ENCODE measurements at regions of chr1 and their contacts with region 1.

Region 1: DNA sequence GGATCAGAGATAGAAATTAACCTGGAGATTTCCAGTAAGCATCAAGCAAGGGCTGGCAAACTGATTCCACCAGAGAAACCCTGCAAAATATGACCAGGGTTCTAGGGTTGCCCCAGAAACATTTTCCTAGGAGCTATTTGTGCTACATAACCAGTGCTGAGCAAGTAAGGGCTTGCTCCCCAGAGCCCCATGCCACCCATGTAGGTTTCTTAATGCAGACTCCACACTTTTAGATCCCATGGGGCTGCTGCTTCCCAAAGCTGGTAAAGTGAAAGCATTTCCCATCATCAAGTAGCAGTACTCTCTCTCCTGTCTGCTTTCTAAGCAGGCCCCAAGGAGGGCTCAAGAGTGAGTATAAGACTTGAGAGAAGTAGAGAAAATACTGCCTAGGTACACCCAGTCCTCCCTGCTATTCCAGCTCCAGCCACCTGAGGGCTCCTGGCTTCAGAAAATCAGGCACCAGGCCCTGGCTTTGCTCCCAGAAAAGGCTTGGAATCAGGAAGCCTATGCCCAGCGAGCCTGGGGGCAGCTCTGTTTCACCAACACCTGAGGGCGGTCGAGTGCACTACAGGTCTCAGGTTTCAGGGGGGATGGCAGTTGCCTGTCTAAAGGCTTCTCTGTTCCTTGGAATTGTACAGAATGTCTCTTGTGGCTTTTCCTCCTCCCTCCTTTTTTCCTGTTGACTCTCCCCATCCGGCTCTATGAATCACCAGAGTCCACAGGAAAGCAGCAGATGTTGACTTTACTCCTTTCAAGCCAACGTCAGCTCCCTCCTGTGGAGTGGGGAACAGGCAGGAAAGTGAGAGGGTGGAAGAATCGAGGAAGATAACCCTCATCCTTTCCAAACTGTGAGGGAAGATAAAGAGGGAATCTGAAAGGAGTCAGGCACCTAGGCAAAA is 6.2 kb upstream of the ANKRD35 start:
- DNase-seq: peak; percentile 86 to 97 (median 92)
- H3K4me3 ChIP-seq: peak overlapping the region in 32 of 59 donors; percentile 0 to 45 (median 20)
- H3K27ac ChIP-seq: peak overlapping the region in 57 of 59 donors; percentile 49 to 97 (median 88)
- H3K27me3 ChIP-seq: no peaks in the 10 kb centered on the region
- CTCF ChIP-seq: peak in 55 of 56 donors; percentile 85 to 100 (median 96)

Region 2: GRCh38 chr1:145845514-145846161 is 46.2 kb before region 1 on chr1 and contains the start of gene NUDT17:
- intact Hi-C with region 1: loop called in 1 of 2 experiments (anchors 2 kb)
- DNase-seq: peak; percentile 57 to 79 (median 72)
- H3K4me3 ChIP-seq: peak within 1 kb of the TSS; percentile 45 to 82 (median 66)
- H3K27ac ChIP-seq: peak within 1 kb of the TSS in 57 of 59 donors; percentile 17 to 89 (median 76)
- H3K27me3 ChIP-seq: no peaks in the 10 kb centered on the region
- CTCF ChIP-seq: peak; percentile 52 to 95 (median 89)
- total RNA-seq, gene NUDT17: 2.6 to 10.1 (median 5.5) TPM

Region 3: GRCh38 chr1:145906954-145907753 is 15.3 kb after region 1 on chr1:
- intact Hi-C with region 1: loop called in 1 of 2 experiments (anchors 2 kb)
- DNase-seq: no peak
- H3K4me3 ChIP-seq: no peak overlapping the region
- H3K27ac ChIP-seq: peak overlapping the region in 1 of 59 donors; percentile 31
- H3K27me3 ChIP-seq: no peaks in the 10 kb centered on the region
- CTCF ChIP-seq: no peak

Region 4: DNA sequence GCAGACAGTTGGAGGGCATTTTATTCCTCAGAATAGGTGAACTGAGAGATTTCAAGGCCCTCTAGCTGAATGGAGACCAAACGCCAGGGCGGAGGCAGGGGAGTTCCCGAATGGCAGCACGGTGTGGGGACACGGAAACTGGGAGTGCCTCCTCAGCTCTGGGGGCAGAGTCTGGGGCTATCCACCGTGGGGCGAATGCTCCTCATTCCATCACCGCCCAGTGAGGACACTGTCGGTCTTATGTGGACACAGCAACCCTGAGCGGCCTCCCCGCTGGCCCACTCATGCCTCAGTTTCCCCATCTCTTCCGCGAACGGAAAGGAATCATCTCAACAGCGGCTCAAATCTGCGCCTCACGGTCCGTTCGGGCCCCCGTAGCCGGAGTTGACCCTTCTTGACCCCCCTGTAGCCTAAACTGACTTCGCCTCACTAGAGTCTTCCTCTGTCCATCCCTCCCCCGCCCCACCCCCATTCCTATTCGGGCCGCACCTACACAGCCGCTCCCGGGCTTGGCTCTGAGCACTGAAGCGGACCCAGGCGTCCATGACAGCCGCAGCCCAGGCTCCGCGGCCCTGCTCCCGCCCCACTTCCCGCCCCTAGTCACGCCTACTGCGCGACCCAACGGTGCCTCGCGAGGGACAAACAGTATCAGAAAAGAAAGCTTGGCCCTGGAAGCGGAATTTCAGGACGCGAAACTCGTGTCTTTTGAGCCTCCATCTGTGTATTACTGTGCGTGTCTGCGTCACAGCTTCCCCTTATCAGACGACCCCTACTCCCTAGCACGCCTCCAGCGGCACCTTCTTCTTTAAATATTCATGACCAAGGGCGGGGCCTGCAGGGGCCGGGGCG is 26.5 kb after region 1 on chr1 and contains the start of gene PEX11B:
- intact Hi-C with region 1: no loop called
- DNase-seq: peak; percentile 84 to 93 (median 89)
- H3K4me3 ChIP-seq: peak within 1 kb of the TSS; percentile 52 to 99 (median 91)
- H3K27ac ChIP-seq: peak within 1 kb of the TSS; percentile 46 to 98 (median 93)
- H3K27me3 ChIP-seq: no peaks in the 10 kb centered on the region
- CTCF ChIP-seq: peak in 13 of 56 donors; percentile 2 to 47 (median 15)
- total RNA-seq, gene PEX11B: 25.0 to 72.0 (median 54.2) TPM

Region 5: GRCh38 chr1:146012737-146013403 is 121.0 kb after region 1 on chr1:
- intact Hi-C with region 1: loop called (anchors 1 to 5 kb)
- DNase-seq: peak in 1 of 10 donors; percentile 40
- H3K4me3 ChIP-seq: peak overlapping the region in 3 of 59 donors; percentile 15 to 26 (median 20)
- H3K27ac ChIP-seq: no peak overlapping the region
- H3K27me3 ChIP-seq: no peaks in the 10 kb centered on the region
- CTCF ChIP-seq: peak; percentile 38 to 97 (median 78)

Measured in dorsolateral prefrontal cortex (tissue), 120 donors.